Caco-2 (cell line): ENCODE measurements at regions of chr11 and their contacts with region 1.

Region 1: DNA sequence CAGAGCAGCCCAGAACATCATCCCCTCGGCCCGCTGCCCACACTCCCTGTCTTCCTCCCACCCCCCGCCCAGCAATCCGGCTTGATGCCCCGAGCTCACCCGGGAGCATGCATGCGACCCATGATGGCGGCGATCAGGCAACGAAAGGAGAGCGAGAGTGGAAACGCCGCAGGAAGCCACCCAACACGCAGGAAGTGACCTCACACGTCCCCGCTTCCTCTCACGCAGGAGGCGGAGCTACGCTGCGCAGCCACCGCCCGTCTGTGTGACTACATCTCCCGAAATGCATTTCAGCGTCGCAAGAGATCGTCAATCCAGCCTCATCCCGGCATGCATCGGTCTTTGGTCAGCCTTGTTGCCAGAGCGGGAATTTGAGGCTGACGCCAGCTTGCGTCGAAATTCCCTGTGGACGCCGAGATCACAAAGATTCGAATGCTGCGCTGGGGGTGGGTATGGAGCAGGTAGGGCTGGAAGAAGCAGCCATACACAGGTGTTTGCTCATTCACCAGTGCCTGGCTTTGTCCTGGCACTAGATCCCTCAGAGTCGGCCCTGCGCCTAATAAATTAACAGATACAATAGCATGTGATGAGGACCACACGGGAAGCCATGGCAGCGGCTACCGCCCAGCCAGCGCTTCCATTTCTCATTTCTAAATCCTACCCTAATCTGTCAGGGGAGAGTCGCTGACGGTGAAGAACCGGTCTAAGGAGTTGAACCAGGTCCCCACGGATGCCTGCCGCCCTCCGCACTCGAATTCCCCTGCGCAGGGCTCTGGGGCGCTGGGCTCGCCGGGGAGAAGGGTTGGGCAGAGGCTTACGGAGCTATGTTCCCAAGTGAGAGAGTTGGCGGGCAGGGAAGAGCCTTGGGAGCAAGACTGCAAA is at the start of gene RPS13:
- DNase-seq: peak; percentile 97 to 99
- H3K4me3 ChIP-seq: peak within 1 kb of the TSS; percentile 84
- H3K4me3 Mint-ChIP-seq: peak within 1 kb of the TSS; percentile 96
- H3K27ac Mint-ChIP-seq: peak within 1 kb of the TSS; percentile 99
- H3K4me1 ChIP-seq: peaks cover 24% of the 10 kb centered on the region
- H3K4me1 Mint-ChIP-seq: peaks cover 7% of the 10 kb centered on the region
- H3K27me3 ChIP-seq: no peaks in the 10 kb centered on the region
- H3K27me3 Mint-ChIP-seq: no peaks in the 10 kb centered on the region
- CTCF ChIP-seq: no peak
- total RNA-seq, gene RPS13: 1,349 and 1,456 TPM in 2 replicates

Region 2: DNA sequence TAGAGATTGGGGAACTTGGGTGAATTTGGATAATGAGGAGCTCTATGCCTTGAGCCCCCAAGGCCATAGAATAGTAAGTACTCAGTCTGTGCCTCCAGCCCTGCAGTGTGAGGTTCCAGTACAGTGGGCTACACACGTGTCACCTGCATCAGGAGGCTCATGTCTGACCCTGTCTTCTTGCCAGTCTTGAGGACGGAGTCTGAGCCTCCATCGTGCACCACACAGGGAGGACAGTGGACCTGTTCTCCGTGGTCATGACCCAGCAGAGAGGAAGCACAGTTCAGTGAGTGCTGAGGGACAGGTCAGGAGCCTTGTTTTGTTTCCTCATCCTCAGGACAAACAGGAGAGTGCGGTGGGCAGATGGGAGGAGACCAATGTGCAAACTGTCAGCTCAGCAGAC is 31.1 kb before region 1 on chr11:
- CTCF ChIA-PET with region 1: no interaction called
- POLR2A ChIA-PET with region 1: interaction called, 3 read pairs
- intact Hi-C with region 1: loop called (anchors 1 kb)
- DNase-seq: no peak
- H3K4me3 ChIP-seq: no peak overlapping the region
- H3K4me3 Mint-ChIP-seq: no peak overlapping the region
- H3K27ac Mint-ChIP-seq: peak overlapping the region; percentile 59
- H3K4me1 ChIP-seq: peaks cover 35% of the 10 kb centered on the region
- H3K4me1 Mint-ChIP-seq: peaks cover 30% of the 10 kb centered on the region
- H3K27me3 ChIP-seq: no peaks in the 10 kb centered on the region
- H3K27me3 Mint-ChIP-seq: no peaks in the 10 kb centered on the region
- CTCF ChIP-seq: no peak